ENCODE measurements at regions of chr17 and their contacts with region 1.

Region 1: DNA sequence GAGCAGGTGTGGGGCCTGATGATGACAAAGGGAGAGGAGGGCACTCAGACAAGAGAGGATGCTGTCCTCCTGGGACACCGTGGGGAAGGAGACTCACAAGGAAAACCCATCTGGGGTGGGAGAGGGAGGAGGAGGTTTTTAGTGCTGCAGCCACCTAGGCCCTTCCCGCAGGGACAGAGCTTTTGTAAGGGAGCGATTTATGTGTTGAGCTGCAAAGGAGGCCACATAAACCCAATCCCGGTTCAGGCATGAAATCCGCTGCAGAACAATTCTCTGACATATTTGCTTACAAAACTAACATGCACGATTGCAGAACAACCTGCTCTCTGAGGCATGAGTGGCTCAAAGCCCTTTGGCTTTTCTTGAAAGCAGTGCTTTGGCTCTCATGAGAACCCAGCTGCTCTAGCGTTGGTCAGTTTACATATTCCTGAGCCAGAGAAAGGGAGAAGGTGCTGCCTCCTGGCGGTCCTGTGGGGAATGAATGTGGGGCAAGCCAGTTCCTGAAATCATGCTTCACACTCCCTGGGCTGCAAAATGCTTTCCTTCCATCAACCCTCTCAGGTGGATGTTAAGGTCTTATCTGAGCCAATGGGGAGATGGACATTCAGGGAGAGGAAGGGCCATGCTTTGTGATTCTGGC is 122.4 kb upstream of the NLRP1 start:
- DNase-seq: peak; percentile 76
- H3K4me3 Mint-ChIP-seq: no peak overlapping the region
- H3K27ac Mint-ChIP-seq: no peak overlapping the region
- H3K4me1 Mint-ChIP-seq: no peaks in the 10 kb centered on the region
- H3K27me3 Mint-ChIP-seq: peaks cover 21% of the 10 kb centered on the region

Region 2: DNA sequence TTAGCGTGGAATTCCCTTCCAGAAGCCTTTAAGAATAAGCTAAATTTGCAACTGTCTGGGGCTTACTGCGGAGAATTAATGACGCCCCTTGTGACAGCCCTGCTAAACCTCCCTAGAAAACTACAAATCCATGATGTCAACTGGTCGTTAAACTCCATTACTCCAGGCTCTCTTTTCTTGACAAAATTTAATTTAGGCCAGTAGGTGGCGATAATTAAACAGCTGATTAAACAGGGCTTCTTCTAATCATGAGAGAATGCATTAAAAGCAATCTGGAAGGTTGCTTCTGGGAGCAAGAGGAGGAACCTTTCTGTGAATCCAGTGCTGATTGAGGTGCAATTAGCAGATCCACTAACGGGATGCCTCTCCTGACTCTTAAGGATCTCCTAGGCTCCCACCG is 114.3 kb before region 1 on chr17:
- CTCF ChIA-PET with region 1: interaction called, 21 read pairs
- intact Hi-C with region 1: loop called (anchors 1 kb)
- DNase-seq: no peak
- H3K4me3 Mint-ChIP-seq: no peak overlapping the region
- H3K27ac Mint-ChIP-seq: no peak overlapping the region
- H3K4me1 Mint-ChIP-seq: peaks cover 1% of the 10 kb centered on the region
- H3K27me3 Mint-ChIP-seq: peaks cover 13% of the 10 kb centered on the region

Region 3: DNA sequence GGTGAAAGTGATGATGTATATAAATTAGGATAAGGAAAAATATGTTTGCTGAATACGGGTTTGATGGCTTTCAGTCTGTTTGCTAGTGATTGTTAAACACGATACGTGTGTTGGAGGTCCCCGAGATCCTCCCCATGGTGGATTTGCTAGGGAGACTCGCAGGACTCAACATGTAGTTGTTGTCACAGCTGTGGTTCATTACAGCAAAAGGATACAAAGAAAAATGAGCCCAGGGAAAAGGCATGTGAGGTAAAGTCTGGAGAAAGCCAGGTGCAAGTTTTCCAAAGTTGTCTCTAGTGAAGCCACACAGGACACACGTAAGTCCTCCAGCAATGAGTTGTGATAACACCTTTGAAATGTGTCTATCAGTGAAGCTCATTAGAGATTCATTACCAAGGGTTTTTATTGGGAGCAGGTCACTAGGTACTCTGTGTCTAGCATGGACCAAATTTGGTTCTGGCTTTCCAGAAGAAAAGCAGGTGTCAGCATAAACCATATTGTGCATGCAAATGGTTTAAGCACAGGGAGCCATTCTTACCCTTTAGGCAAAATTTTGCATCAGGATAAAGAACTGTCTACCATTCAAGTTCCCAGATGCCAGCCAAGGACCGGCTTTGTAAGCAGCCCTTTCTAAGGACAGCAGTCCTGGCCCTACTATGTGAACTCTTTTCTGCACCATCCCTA is 148.3 kb after region 1 on chr17:
- CTCF ChIA-PET with region 1: no interaction called
- intact Hi-C with region 1: no loop called
- DNase-seq: no peak
- H3K4me3 Mint-ChIP-seq: no peak overlapping the region
- H3K27ac Mint-ChIP-seq: no peak overlapping the region
- H3K4me1 Mint-ChIP-seq: no peaks in the 10 kb centered on the region
- H3K27me3 Mint-ChIP-seq: no peaks in the 10 kb centered on the region

Region 4: GRCh38 chr17:6421700-6422604 is 715.3 kb after region 1 on chr17:
- CTCF ChIA-PET with region 1: interaction called, 3 read pairs
- intact Hi-C with region 1: loop called (anchors 5 kb)
- DNase-seq: peak; percentile 84
- H3K4me3 Mint-ChIP-seq: no peak overlapping the region
- H3K27ac Mint-ChIP-seq: no peak overlapping the region
- H3K4me1 Mint-ChIP-seq: peaks cover 2% of the 10 kb centered on the region
- H3K27me3 Mint-ChIP-seq: peaks cover 6% of the 10 kb centered on the region

Measured in activated naive CD4-positive, alpha-beta T cell treated with anti-CD3 and anti-CD28 coated beads for 36 hours (primary cell).